Activated B cell treated with CpG ODN at 0.5 μM for 24 hours (primary cell): ENCODE measurements at regions of chr14 and their contacts with region 1.

Region 1: GRCh38 chr14:49959822-49960408 is 67.0 kb downstream of the ARF6 start:
- DNase-seq: no peak
- ATAC-seq: peak; percentile 59
- H3K4me3 Mint-ChIP-seq: peak overlapping the region; percentile 71
- H3K27ac Mint-ChIP-seq: peak overlapping the region; percentile 96
- H3K4me1 Mint-ChIP-seq: peaks cover 67% of the 10 kb centered on the region
- H3K27me3 Mint-ChIP-seq: no peaks in the 10 kb centered on the region
- CTCF ChIP-seq: no peak

Region 2: DNA sequence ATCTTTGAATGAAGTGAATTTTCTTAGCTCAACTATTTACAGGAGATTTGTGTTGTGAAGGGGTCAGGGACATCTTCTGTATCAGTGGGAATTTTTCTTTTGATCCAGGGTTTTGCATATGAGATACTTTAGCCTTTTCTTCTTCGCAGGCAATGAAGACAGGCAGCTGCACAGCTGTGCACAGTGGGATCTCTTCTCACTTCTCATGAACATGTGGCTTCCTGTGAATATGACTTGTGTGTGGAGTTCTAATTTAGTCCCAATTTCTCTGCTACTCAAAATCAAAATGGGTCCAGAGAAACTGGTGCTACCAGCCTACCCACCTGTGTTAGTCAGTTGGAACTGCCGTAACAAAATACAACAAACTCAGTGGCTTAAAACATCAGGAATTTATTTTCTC is 29.2 kb before region 1 on chr14:
- CTCF ChIA-PET with region 1: no interaction called
- POLR2A ChIA-PET with region 1: interaction called, 23 read pairs
- intact Hi-C with region 1: loop called (anchors 1 kb)
- DNase-seq: no peak
- ATAC-seq: no peak
- H3K4me3 Mint-ChIP-seq: peak overlapping the region; percentile 40
- H3K27ac Mint-ChIP-seq: peak overlapping the region; percentile 88
- H3K4me1 Mint-ChIP-seq: peaks cover 34% of the 10 kb centered on the region
- H3K27me3 Mint-ChIP-seq: no peaks in the 10 kb centered on the region
- CTCF ChIP-seq: no peak

Region 3: DNA sequence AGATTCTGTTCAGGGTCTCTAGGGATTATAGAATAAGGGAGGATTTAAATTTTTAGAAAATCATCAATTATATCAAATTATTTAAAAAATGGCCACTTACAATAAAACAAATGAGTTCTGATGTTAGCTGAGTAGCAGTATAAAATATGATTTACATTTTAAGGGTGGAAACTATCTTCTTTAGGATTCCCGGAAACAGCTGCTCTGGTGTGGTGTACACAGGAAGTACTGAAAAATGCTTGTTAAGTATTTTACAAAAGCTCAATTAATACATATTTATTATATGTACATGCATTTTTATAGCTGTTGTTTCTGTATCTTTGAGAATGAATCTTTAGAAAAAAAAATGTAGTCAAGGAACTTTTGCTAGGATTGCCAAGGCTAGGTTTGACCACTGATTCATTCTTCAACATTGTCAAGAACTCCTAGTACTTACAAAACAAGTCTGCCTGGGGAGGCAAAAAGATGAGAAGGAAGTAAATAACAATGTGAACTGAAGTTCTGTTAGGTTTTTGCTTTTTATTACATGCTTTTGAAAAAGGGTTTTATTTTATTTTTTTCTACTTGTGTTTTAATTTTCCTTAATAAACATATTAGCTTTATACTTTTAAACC is 19.0 kb before region 1 on chr14:
- CTCF ChIA-PET with region 1: no interaction called
- POLR2A ChIA-PET with region 1: interaction called, 16 read pairs
- intact Hi-C with region 1: loop called (anchors 2 kb)
- DNase-seq: no peak
- ATAC-seq: peak; percentile 42
- H3K4me3 Mint-ChIP-seq: peak overlapping the region; percentile 7
- H3K27ac Mint-ChIP-seq: peak overlapping the region; percentile 61
- H3K4me1 Mint-ChIP-seq: peaks cover 42% of the 10 kb centered on the region
- H3K27me3 Mint-ChIP-seq: no peaks in the 10 kb centered on the region
- CTCF ChIP-seq: no peak

Region 4: DNA sequence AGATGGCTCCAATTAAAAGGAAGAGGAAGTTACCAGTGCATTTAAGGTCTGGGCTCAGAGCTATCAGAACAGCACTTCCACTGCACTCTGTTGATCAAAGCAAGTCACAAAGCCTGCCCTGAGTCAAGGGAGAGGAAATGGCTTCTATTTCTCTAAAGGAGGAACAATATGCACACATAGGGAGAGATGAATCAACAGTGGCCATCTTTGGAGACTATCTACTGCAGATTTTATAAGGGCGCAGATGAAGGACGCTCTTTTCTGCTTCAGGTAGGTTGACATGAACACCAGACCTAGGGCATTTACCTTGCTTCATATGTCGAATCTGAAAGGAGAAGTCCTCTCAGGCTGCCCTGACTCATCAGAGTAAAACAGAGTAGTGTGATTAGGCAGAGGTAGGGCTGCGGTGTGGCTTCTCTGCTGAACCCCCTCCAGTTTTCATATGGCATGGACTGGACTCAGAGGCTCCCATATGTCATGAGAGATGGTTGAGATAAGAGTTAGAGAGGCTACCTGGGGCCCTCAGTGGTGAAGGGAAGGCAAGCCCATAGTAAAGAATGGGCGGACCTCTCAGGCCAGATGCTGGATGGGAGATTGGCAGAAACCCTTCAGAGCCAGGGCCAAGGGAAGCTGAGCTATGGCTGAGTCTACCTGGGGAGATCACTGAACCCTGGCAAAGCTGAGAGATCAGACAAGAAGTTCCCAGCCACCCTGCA is 17.4 kb after region 1 on chr14:
- CTCF ChIA-PET with region 1: interaction called, 19 read pairs
- POLR2A ChIA-PET with region 1: interaction called, 110 read pairs
- intact Hi-C with region 1: no loop called
- DNase-seq: no peak
- ATAC-seq: peak; percentile 87
- H3K4me3 Mint-ChIP-seq: peak overlapping the region; percentile 76
- H3K27ac Mint-ChIP-seq: peak overlapping the region; percentile 95
- H3K4me1 Mint-ChIP-seq: peaks cover 88% of the 10 kb centered on the region
- H3K27me3 Mint-ChIP-seq: no peaks in the 10 kb centered on the region
- CTCF ChIP-seq: no peak

Region 5: DNA sequence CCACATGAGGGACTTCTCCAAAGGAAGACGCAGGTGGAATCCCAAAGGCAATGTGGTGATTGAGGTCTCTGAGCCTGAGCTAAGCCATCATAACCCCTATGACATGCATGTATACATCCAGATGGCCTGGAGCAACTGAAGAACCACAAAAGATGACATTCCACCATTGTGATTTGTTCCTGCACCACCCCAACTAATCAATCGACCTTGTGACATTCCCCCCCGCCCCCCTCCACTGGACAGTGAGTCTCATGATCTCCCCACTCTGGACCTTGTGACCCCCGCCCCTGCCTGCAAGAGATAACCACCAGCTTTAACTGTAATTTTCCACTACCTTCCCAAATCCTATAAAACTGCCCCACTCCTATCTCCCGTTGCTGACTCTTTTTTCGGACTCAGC is 68.5 kb after region 1 on chr14:
- CTCF ChIA-PET with region 1: no interaction called
- POLR2A ChIA-PET with region 1: no interaction called
- intact Hi-C with region 1: no loop called
- DNase-seq: no peak
- ATAC-seq: no peak
- H3K4me3 Mint-ChIP-seq: no peak overlapping the region
- H3K27ac Mint-ChIP-seq: no peak overlapping the region
- H3K4me1 Mint-ChIP-seq: peaks cover 2% of the 10 kb centered on the region
- H3K27me3 Mint-ChIP-seq: no peaks in the 10 kb centered on the region
- CTCF ChIP-seq: no peak

Region 6: DNA sequence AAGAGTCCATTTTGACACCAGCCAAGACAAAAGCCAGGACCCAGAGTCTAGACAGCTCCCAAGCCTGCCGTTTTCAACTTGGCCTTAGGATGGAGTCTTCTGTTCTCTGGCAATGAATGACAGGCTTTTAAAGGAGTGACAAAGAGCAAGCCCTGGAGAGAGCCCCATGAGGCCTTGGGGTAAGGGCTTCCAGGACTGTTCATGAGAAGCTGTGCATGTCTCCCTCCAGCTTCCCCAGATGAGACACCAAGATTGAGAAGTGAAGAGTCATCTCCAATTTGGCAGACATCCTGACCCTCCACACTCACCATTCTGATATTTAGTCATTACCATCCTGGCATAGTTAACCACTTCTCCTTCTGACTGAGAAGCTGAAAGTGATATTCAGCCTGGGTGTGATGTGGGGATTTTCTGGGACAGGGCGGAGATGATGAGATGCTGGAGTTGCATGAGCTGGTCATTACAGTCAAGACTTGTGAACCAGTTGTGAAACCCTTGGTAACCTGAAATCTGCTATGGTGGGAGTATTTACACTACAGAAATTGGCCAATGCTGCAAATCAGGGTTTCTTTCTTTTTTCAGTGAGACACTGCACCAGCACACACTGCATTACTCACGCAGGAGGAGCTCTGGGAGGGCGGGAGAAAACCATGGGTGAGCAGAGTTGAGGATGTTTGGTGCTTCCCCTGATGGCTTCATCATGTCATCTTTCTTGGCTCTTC is 78.6 kb after region 1 on chr14:
- CTCF ChIA-PET with region 1: no interaction called
- POLR2A ChIA-PET with region 1: interaction called, 18 read pairs
- intact Hi-C with region 1: loop called (anchors 1 kb)
- DNase-seq: no peak
- ATAC-seq: peak; percentile 78
- H3K4me3 Mint-ChIP-seq: peak overlapping the region; percentile 52
- H3K27ac Mint-ChIP-seq: peak overlapping the region; percentile 93
- H3K4me1 Mint-ChIP-seq: peaks cover 45% of the 10 kb centered on the region
- H3K27me3 Mint-ChIP-seq: no peaks in the 10 kb centered on the region
- CTCF ChIP-seq: no peak

Region 7: GRCh38 chr14:50045039-50045711 is 85.3 kb after region 1 on chr14:
- CTCF ChIA-PET with region 1: no interaction called
- POLR2A ChIA-PET with region 1: interaction called, 10 read pairs
- intact Hi-C with region 1: no loop called
- DNase-seq: no peak
- ATAC-seq: peak; percentile 70
- H3K4me3 Mint-ChIP-seq: peak overlapping the region; percentile 2
- H3K27ac Mint-ChIP-seq: peak overlapping the region; percentile 92
- H3K4me1 Mint-ChIP-seq: peaks cover 71% of the 10 kb centered on the region
- H3K27me3 Mint-ChIP-seq: no peaks in the 10 kb centered on the region
- CTCF ChIP-seq: no peak